ENCODE measurements at regions of chr1 and their contacts with region 1.

Region 1: GRCh38 chr1:167533851-167534300 is 15.5 kb upstream of the CD247 start:
- DNase-seq: peak; percentile 68
- H3K4me3 ChIP-seq: no peak overlapping the region
- H3K27ac ChIP-seq: no peak overlapping the region
- H3K4me1 ChIP-seq: peaks cover 21% of the 10 kb centered on the region
- H3K27me3 ChIP-seq: no peaks in the 10 kb centered on the region
- CTCF ChIP-seq: peak; percentile 87 to 90

Region 2: GRCh38 chr1:166902271-166902670 is 631.6 kb before region 1 on chr1:
- CTCF ChIA-PET with region 1: no interaction called
- dilution Hi-C with region 1: no loop called
- in situ Hi-C with region 1: no loop called
- intact Hi-C with region 1: loop called (anchors 10 kb)
- DNase-seq: peak; percentile 84
- H3K4me3 ChIP-seq: no peak overlapping the region
- H3K27ac ChIP-seq: no peak overlapping the region
- H3K4me1 ChIP-seq: peaks cover 8% of the 10 kb centered on the region
- H3K27me3 ChIP-seq: no peaks in the 10 kb centered on the region
- CTCF ChIP-seq: peak in 1 of 2 donors; percentile 6

Region 3: DNA sequence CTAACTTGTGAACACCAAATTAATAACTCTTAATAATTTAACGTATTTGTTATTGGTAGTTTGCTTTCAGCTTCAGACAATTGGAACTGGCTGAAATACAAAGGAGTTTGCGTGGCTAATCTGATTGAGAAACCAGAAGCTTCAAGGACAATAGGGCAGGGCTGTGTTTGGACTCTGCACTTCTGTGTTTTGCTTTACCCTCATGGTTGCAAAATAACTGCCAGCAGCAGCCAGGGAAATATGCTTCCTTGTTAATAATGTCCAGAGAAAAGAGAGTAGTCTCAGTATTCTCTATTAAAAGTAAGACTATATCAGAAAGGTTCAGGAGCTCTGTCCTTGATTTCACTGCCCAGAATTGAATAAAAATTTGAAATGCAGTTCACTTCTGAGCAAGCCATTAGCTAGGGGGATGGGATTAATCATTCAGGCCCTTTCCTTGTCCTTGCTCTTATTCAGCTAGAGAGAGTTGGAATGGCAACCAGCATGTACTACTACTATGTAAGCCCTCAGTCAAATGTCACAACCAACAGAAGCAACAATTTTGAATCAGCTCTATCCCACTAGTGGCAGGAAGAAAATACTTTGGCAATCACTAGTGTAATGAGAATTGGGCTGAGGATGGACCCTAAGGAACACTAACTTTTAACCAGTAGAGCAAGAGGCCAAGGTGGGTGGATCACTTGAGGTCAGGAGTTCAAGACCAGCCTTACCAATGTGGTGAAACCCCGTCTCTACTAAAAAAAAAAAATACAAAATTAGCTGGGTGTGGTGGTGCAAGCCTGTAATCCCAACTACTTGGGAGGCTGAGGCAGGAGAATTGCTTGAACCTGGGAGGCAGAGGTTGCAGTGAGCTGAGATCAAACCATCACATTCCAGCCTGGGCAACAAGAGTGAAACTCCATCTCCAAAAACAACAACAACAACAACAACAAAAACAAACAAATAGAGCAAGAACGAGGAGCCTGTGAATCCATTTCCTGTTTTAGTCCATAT is 236.4 kb before region 1 on chr1:
- CTCF ChIA-PET with region 1: no interaction called
- dilution Hi-C with region 1: no loop called
- in situ Hi-C with region 1: loop called in 1 of 2 experiments (anchors 25 kb)
- intact Hi-C with region 1: no loop called
- DNase-seq: no peak
- H3K4me3 ChIP-seq: no peak overlapping the region
- H3K27ac ChIP-seq: no peak overlapping the region
- H3K4me1 ChIP-seq: no peaks in the 10 kb centered on the region
- H3K27me3 ChIP-seq: no peaks in the 10 kb centered on the region
- CTCF ChIP-seq: no peak

Region 4: DNA sequence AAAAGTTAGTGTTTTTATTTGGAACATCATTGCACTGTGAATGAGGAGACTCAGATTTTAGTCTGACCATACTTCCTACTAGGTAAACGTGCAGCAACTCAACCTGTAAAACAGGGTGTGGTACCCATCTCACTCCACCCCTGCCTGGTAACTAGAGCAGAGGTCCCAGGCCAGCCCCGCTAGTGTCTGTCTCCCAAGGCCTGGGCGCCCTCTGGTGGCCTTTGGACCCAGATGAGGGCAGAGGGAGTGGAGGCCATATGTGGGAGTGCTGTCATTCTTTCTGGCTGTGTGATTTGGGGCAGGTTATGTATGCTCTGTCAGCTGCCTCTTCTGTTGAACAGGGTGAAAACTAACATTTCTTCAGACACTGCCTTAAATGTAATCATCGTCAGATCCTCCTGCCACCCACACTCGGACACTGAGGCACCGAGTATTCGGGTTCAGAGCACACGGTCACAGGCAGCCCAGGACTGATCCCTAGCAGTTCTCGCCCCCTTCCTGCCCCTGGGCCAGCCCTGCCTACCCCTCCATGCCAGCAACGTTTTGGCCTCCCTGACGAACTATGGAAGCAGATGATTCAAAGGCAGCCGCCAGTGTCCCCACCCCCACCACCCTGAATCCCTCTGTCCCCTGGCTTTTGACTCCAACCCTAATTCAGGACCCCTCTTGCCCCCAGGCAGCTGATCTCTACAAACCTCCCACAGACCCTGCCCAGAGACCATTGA is 91.6 kb before region 1 on chr1:
- CTCF ChIA-PET with region 1: no interaction called
- dilution Hi-C with region 1: no loop called
- in situ Hi-C with region 1: no loop called
- intact Hi-C with region 1: loop called (anchors 5 kb)
- DNase-seq: peak; percentile 73
- H3K4me3 ChIP-seq: no peak overlapping the region
- H3K27ac ChIP-seq: no peak overlapping the region
- H3K4me1 ChIP-seq: peaks cover 6% of the 10 kb centered on the region
- H3K27me3 ChIP-seq: no peaks in the 10 kb centered on the region
- CTCF ChIP-seq: peak; percentile 92

Region 5: DNA sequence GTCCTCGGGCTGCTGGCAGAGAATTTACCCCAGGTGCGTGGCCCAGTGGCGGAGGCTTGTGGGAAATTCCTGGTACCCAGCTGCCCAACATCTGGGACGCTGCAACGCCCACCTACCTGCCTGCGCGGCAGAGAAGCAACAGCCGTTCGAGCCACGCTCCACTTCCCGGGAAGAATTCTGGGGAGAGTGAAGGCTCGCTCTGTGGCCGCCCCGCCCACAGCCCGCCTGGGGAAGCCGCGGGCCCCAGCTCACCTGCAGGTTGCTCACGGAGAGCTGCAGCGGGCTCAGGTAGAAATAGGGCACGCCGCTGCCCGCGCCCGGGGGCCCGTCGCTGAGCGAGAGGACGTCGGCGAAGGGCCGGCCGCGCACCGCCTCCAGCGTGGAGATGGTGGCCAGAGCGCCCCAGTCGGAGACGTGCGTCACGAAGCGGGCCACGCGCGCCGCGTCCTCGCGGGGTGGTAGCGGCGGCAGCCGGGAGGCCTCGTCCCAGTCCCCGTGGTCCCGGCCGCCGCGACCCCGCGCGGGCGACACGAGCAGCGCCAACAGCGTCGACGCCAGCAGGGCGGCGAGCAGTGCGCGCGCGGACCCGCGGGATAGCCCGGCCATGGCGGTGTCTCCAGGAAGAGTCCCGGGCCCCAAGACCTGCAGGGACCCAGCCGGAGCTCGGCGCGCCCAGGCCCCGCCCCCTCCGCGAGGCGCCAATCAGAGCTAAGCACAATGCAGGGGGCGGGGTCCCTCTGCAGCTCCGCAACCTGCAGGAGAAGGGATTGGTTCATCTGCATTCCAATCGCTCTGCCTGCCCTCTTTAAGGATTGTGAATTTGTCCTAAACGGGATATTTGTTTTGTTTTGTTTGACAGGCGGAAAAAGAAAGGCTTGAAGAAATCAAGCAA is 19.5 kb after region 1 on chr1 and contains the start of gene CREG1:
- CTCF ChIA-PET with region 1: no interaction called
- dilution Hi-C with region 1: no loop called
- in situ Hi-C with region 1: no loop called
- intact Hi-C with region 1: loop called (anchors 1 kb)
- DNase-seq: peak; percentile 92
- H3K4me3 ChIP-seq: peak within 1 kb of the TSS; percentile 65 to 89 (median 66)
- H3K27ac ChIP-seq: peak within 1 kb of the TSS; percentile 47
- H3K4me1 ChIP-seq: peaks cover 46% of the 10 kb centered on the region
- H3K27me3 ChIP-seq: no peaks in the 10 kb centered on the region
- CTCF ChIP-seq: no peak
- total RNA-seq, gene CREG1: 105 to 242 TPM